Caco-2 (cell line): ENCODE measurements at regions of chr4 and their contacts with region 1.

Region 1: DNA sequence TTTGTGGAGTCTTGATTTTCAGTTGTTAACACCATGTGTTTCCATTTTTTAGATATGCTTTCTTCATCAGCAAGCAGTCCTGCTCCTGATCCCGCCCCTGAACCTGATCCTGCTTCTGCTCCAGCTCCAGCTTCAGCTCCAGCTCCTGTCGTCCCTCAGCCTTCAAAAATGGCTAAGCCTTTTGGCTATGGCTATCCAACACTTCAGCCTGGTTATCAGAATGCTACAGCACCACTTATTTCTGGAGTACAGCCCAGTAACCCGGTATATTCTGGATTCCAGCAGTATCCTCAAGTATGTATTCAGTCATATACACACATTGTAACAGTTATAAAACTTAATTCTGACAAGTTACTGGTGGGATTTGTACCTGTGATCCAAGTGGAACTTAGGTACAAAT is 60.9 kb downstream of the SEC24B start:
- DNase-seq: no peak
- H3K4me3 ChIP-seq: no peak overlapping the region
- H3K4me3 Mint-ChIP-seq: no peak overlapping the region
- H3K27ac Mint-ChIP-seq: no peak overlapping the region
- H3K4me1 ChIP-seq: no peaks in the 10 kb centered on the region
- H3K4me1 Mint-ChIP-seq: no peaks in the 10 kb centered on the region
- H3K27me3 ChIP-seq: no peaks in the 10 kb centered on the region
- H3K27me3 Mint-ChIP-seq: no peaks in the 10 kb centered on the region
- CTCF ChIP-seq: no peak

Region 2: GRCh38 chr4:109233585-109233984 is 261.0 kb before region 1 on chr4:
- CTCF ChIA-PET with region 1: no interaction called
- POLR2A ChIA-PET with region 1: no interaction called
- intact Hi-C with region 1: no loop called
- DNase-seq: no peak
- H3K4me3 ChIP-seq: no peak overlapping the region
- H3K4me3 Mint-ChIP-seq: no peak overlapping the region
- H3K27ac Mint-ChIP-seq: no peak overlapping the region
- H3K4me1 ChIP-seq: no peaks in the 10 kb centered on the region
- H3K4me1 Mint-ChIP-seq: no peaks in the 10 kb centered on the region
- H3K27me3 ChIP-seq: no peaks in the 10 kb centered on the region
- H3K27me3 Mint-ChIP-seq: no peaks in the 10 kb centered on the region
- CTCF ChIP-seq: no peak

Region 3: GRCh38 chr4:109472343-109472761 is 22.2 kb before region 1 on chr4:
- CTCF ChIA-PET with region 1: no interaction called
- POLR2A ChIA-PET with region 1: interaction called, 10 read pairs
- intact Hi-C with region 1: no loop called
- DNase-seq: no peak
- H3K4me3 ChIP-seq: no peak overlapping the region
- H3K4me3 Mint-ChIP-seq: no peak overlapping the region
- H3K27ac Mint-ChIP-seq: no peak overlapping the region
- H3K4me1 ChIP-seq: no peaks in the 10 kb centered on the region
- H3K4me1 Mint-ChIP-seq: no peaks in the 10 kb centered on the region
- H3K27me3 ChIP-seq: no peaks in the 10 kb centered on the region
- H3K27me3 Mint-ChIP-seq: no peaks in the 10 kb centered on the region
- CTCF ChIP-seq: no peak

Region 4: DNA sequence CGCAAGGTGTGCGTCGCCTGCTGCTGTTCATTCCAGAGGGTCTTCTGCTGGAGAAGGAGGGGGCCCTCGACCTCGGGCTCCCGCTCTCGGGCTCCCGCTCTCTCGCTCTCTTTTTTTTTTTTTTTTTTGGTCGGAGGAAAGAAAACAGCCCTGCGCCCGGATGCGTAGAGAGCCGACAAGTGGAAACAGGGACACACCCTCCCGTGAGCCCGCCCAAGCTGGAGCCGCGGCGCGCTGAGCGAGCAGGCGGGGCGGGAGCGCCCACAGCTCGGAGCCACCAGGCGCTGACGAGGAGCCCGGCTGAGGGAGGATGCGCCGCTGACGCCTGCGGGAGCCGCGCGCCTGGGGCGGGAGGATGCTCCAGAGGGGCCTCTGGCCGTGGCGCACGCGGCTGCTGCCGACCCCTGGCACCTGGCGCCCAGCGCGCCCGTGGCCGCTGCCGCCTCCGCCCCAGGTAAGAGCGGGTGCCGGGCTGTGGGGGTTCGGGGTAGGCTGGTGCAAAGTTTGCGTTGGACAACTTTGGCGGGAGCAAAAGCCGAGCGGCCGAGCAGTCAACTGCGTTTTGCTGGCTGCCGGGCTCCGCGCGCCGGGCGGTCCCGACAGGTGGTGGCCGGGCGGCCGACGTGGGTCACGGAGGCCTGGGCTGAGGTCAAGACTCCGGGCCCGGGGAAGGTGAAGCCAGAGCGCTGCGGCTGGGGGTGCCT is 65.6 kb after region 1 on chr4 and contains the start of gene MCUB:
- CTCF ChIA-PET with region 1: no interaction called
- POLR2A ChIA-PET with region 1: no interaction called
- intact Hi-C with region 1: no loop called
- DNase-seq: peak; percentile 75 to 77
- H3K4me3 ChIP-seq: peak within 1 kb of the TSS; percentile 40
- H3K4me3 Mint-ChIP-seq: peak within 1 kb of the TSS; percentile 68
- H3K27ac Mint-ChIP-seq: no peak within 1 kb of the TSS
- H3K4me1 ChIP-seq: 0 out of 2 replicates have a peak, but pooled peaks cover 4% of the 10 kb centered on the region
- H3K4me1 Mint-ChIP-seq: peaks cover 9% of the 10 kb centered on the region
- H3K27me3 ChIP-seq: no peaks in the 10 kb centered on the region
- H3K27me3 Mint-ChIP-seq: no peaks in the 10 kb centered on the region
- CTCF ChIP-seq: no peak
- total RNA-seq, gene MCUB: 1.8 and 3.6 TPM in 2 replicates